Posterior cingulate gyrus (tissue), 11 donors: ENCODE measurements at regions of chr1 and their contacts with region 1.

Region 1: DNA sequence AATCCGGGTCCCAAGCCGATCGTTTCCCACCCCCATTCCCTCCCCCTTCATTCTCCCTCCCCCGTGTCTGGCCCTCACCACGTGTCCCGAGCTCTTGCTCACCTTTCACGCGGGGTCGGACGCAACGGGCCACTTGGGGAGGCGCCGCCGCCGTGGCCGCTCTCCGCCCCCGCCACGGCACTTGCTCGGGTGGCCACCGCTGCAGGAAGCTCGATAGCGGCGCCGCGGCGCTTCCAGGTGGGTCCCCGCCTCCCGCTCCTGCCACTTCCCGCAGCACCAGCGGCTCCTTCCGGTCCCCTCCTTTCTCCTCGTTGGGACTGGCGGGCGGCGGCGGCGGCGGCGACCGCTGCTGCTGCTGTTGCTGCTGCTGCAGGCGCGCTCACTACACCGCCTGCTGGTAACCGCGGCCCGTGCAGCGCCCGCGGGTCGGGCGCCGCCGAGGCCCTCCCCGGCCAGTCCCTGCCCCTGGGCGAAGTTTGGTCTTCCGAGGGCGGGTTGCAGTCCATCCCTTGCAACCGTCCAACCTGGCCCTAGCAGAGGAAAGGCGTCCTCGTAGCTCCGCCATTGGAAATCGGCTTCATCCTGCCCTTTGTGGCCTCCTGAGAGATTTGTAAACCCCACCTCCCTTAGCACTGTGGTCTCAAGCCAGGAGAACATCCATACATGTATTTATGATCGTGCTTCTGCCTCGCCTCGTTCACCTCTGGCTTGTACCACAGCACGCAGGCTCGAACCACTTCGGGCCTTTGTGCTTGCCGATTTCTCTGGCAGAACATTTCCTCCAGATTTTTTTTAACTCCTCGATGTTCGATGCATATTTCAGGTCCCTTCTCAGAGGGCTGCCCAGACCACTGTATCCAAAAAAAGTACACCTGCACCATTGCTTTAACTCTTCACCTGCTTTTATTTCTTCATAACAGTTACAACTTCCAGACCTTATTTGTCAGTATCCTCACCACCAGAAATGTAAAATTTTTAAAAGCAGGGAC is 996 bp upstream of the ZZZ3 start:
- DNase-seq: peak; percentile 81 to 99 (median 92)

Region 2: DNA sequence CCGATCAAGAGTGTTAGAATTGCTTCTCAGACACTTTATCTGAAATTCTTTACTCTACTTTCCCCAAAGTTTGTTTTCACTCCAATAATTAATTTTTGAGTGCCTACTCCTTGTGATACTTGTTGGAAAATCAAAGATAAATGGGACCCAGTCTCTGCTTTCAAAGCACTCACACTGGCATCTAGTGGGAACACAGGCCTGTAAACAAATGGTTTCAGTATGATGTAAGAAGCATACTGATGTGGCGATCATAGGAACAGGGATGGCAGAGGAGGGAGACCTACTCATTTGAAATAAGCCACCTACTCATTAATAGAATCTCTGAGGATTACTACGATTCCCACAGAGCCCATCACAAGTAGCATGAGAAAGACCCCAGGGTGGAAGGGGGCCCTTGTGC is 1089.8 kb before region 1 on chr1:
- intact Hi-C with region 1: no loop called
- DNase-seq: no peak

Region 3: GRCh38 chr1:77143529-77144121 is 539.8 kb before region 1 on chr1:
- intact Hi-C with region 1: loop called (anchors 2 kb)
- DNase-seq: no peak

Region 4: DNA sequence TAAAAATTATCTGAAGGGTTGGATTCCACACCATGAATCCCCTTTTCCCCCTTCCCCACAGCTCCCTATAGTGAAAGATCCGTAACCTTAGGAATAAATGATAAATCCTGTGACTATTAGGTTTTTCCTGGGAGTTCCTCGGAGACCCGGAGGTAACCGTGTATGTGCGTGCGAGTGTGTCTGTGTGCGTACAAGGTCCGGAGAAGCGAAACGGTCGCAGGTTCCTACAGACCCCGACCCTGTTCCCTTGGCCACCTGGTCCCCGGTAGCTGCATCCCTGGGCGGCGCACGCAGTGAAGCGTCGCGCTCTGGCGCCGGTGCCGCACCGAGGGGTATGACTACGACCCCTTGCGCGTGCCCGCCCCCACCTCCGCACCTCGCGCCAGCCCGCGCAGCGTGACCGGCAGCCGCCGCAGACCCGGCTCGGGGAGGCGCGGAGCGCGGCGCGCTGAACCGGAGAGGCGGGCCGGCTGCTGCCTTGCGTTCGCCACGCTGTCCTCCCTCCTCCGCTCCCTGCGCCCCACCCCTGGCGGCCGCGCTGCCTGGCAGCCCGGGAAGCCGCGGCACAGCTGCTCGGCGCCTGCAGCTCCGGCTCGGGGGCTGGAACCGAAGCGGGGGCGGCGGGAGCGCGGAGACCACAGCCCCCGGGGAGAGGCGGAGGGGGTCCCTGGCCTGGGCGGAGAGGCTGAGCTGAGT is 401.8 kb before region 1 on chr1 and contains the start of gene AK5:
- intact Hi-C with region 1: loop called (anchors 5 kb)
- DNase-seq: peak; percentile 46 to 95 (median 64)

Region 5: DNA sequence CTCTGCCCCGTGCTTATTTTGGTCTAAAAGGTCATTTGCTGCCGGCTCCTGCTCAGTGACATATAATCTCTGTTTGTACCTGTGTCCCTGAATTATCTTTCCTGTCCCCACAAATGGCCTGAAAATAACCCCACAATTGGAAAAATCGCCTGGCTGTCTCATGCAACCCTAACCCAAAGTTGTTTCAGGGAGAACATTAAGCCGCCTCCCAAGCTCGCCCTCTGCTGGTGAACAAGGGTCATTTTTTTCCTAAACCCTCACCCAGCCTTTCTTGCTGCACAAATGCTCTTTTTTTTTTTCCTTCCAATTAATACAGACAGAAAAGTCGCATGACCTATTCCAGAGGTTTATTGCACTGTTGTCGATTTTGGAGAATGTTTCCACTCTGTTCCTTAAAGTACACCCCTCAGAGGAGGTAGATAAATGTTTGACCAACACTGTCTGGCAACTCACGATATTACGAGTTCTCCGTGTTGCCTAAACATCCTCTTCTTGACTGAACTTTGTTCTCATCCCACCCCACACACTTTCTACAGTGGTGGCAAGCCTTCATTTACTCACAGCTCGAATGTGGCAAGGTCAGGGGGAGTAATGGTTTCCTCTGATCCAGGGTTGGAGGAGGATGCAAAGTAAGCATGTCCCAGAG is 149.7 kb before region 1 on chr1:
- intact Hi-C with region 1: loop called (anchors 5 kb)
- DNase-seq: peak; percentile 40 to 95 (median 68)

Region 6: GRCh38 chr1:77623066-77623465 is 60.4 kb before region 1 on chr1:
- intact Hi-C with region 1: no loop called
- DNase-seq: no peak

Region 7: DNA sequence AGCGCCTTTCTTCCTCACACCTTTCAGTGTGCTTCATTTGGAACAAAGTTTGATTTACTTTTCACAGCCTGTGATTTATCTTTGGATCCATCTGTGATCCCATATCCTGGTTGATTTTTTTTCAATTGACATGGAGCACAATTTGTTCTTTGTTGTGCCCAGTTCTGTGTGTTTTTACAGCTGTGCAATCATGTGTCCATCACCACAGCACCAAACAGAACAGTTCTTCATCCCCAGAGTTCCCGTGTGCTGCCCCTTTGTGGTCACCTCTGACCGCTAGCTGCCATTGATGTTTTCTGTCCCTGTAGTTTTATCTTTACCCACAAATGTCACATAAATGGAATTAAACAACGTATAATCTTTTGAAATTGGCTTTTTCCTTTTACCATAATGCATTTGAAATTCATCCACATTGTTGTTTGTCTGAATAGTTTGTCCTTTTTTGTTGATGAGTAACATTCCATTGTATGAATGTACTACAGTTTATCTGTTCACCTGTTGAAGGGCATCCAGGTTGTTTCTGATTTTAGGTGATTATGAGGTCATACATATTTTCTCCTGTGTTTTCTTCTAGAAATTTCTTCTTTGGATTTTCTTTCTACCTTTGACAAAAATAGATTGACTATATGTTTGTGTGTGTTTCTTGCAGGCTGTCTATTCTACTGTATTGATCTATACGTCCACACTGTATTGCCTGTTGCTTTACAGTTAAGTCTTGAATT is 113.4 kb after region 1 on chr1:
- intact Hi-C with region 1: loop called (anchors 10 kb)
- DNase-seq: peak in 6 of 10 donors; percentile 25 to 91 (median 46)

Region 8: GRCh38 chr1:77900687-77901293 is 217.3 kb after region 1 on chr1:
- intact Hi-C with region 1: no loop called
- DNase-seq: peak in 3 of 10 donors; percentile 15 to 38 (median 25)